Caco-2 (cell line): ENCODE measurements at regions of chr5 and their contacts with region 1.

Region 1: GRCh38 chr5:137220523-137220927 is 278.6 kb downstream of the SPOCK1 start:
- DNase-seq: peak; percentile 43 to 58
- H3K4me3 ChIP-seq: no peak overlapping the region
- H3K4me3 Mint-ChIP-seq: no peak overlapping the region
- H3K27ac Mint-ChIP-seq: no peak overlapping the region
- H3K4me1 ChIP-seq: no peaks in the 10 kb centered on the region; the same call in 1 of the 2 replicates
- H3K4me1 Mint-ChIP-seq: peaks cover 7% of the 10 kb centered on the region
- H3K27me3 ChIP-seq: no peaks in the 10 kb centered on the region
- H3K27me3 Mint-ChIP-seq: no peaks in the 10 kb centered on the region
- CTCF ChIP-seq: peak in 1 of 2 experiments; percentile 60

Region 2: DNA sequence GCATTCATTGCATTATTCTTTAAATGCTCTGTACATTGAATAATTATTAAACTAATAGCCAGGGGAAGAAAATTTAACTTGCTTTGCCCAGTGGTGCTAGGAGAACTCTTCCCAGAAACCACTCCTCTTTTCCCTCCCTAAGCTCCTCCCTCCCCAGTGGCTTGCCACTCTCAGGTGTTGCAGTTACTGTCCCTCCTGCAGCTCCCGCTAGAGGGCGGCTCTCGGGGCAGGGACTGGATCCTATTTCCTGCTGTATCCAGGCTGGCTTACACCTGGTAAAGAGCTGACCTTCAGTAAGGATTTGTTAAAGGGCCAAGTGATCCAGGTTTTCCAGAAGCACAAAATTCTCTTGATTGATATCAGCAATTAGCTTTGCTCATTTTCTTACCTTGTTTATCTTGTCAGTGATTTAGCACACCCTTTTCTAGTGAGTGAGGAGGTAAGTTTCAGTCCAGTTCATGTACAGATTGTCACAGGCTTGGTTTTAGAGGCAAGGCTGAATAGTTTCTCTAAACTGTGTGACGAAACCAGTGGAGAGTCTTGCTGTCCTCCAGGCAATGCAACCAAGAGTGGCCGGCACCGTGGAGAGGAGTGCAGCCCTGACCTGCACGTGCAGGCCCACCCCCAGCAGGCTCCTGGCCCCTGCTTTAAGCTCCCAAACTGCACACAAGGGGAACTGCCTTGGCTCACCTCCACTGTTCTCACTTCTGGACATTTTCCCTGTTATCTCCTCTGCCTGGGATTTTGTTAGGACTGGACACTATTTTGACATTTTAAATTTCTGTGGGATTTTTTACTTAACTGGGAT is 145.2 kb before region 1 on chr5:
- CTCF ChIA-PET with region 1: interaction called, 7 read pairs
- POLR2A ChIA-PET with region 1: no interaction called
- intact Hi-C with region 1: loop called (anchors 1 kb)
- DNase-seq: peak; percentile 82
- H3K4me3 ChIP-seq: no peak overlapping the region
- H3K4me3 Mint-ChIP-seq: no peak overlapping the region
- H3K27ac Mint-ChIP-seq: no peak overlapping the region
- H3K4me1 ChIP-seq: no peaks in the 10 kb centered on the region
- H3K4me1 Mint-ChIP-seq: no peaks in the 10 kb centered on the region
- H3K27me3 ChIP-seq: no peaks in the 10 kb centered on the region
- H3K27me3 Mint-ChIP-seq: peaks cover 37% of the 10 kb centered on the region
- CTCF ChIP-seq: peak; percentile 69 to 84

Region 3: DNA sequence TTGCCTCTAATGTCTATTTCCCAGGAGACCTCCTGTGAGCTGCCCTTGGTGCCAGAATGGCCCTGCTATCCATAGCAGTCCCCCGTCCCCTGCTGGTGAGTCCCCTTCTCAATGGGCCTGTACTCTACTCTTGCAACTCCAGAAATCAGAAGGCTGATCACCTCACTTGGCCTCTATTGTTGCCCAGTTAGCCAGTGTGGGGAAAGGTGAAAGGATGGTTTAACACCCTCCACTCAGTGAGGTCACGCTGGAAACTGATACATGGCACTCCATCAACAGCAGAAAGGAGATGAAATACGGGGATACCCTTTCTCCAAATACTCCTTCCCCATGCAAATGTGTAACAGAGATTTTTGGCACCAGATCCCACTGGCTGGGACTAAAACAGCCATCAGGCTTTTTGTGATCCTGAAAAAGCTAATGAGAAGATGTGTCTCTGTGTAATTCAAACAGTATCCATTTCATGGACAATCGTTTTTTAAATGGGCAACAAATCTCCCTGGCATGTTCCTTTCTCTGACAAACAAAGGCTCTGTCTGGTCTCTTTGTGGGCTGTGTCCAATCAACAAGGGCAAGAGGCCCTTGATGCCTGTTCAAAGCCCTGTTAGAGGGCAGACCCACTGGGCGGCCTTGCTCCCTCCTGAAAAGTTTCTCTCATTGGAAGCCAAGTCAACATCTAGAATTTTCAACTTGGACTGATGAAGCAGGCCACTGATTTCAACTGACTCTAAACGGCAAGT is 65.1 kb before region 1 on chr5:
- CTCF ChIA-PET with region 1: no interaction called
- POLR2A ChIA-PET with region 1: no interaction called
- intact Hi-C with region 1: no loop called
- DNase-seq: no peak
- H3K4me3 ChIP-seq: no peak overlapping the region
- H3K4me3 Mint-ChIP-seq: no peak overlapping the region
- H3K27ac Mint-ChIP-seq: no peak overlapping the region
- H3K4me1 ChIP-seq: no peaks in the 10 kb centered on the region
- H3K4me1 Mint-ChIP-seq: no peaks in the 10 kb centered on the region
- H3K27me3 ChIP-seq: no peaks in the 10 kb centered on the region; the same call in 1 of the 2 replicates
- H3K27me3 Mint-ChIP-seq: peaks cover 6% of the 10 kb centered on the region
- CTCF ChIP-seq: no peak

Region 4: GRCh38 chr5:137186759-137187461 is 33.6 kb before region 1 on chr5:
- CTCF ChIA-PET with region 1: no interaction called
- POLR2A ChIA-PET with region 1: no interaction called
- intact Hi-C with region 1: no loop called
- DNase-seq: no peak
- H3K4me3 ChIP-seq: no peak overlapping the region
- H3K4me3 Mint-ChIP-seq: no peak overlapping the region
- H3K27ac Mint-ChIP-seq: no peak overlapping the region
- H3K4me1 ChIP-seq: no peaks in the 10 kb centered on the region
- H3K4me1 Mint-ChIP-seq: no peaks in the 10 kb centered on the region
- H3K27me3 ChIP-seq: no peaks in the 10 kb centered on the region; the same call in 1 of the 2 replicates
- H3K27me3 Mint-ChIP-seq: peaks cover 17% of the 10 kb centered on the region
- CTCF ChIP-seq: no peak

Region 5: GRCh38 chr5:137201876-137202275 is 18.6 kb before region 1 on chr5:
- CTCF ChIA-PET with region 1: no interaction called
- POLR2A ChIA-PET with region 1: no interaction called
- intact Hi-C with region 1: loop called (anchors 1 kb)
- DNase-seq: peak in 1 of 2 experiments; percentile 9
- H3K4me3 ChIP-seq: no peak overlapping the region
- H3K4me3 Mint-ChIP-seq: no peak overlapping the region
- H3K27ac Mint-ChIP-seq: no peak overlapping the region
- H3K4me1 ChIP-seq: no peaks in the 10 kb centered on the region
- H3K4me1 Mint-ChIP-seq: no peaks in the 10 kb centered on the region
- H3K27me3 ChIP-seq: no peaks in the 10 kb centered on the region
- H3K27me3 Mint-ChIP-seq: peaks cover 27% of the 10 kb centered on the region
- CTCF ChIP-seq: no peak

Region 6: GRCh38 chr5:137286025-137286610 is 65.6 kb after region 1 on chr5:
- CTCF ChIA-PET with region 1: no interaction called
- POLR2A ChIA-PET with region 1: no interaction called
- intact Hi-C with region 1: no loop called
- DNase-seq: no peak
- H3K4me3 ChIP-seq: no peak overlapping the region
- H3K4me3 Mint-ChIP-seq: no peak overlapping the region
- H3K27ac Mint-ChIP-seq: no peak overlapping the region
- H3K4me1 ChIP-seq: no peaks in the 10 kb centered on the region
- H3K4me1 Mint-ChIP-seq: no peaks in the 10 kb centered on the region
- H3K27me3 ChIP-seq: no peaks in the 10 kb centered on the region; the same call in 1 of the 2 replicates
- H3K27me3 Mint-ChIP-seq: peaks cover 22% of the 10 kb centered on the region
- CTCF ChIP-seq: no peak